ENCODE measurements at regions of chr1 and their contacts with region 1.

Region 1: DNA sequence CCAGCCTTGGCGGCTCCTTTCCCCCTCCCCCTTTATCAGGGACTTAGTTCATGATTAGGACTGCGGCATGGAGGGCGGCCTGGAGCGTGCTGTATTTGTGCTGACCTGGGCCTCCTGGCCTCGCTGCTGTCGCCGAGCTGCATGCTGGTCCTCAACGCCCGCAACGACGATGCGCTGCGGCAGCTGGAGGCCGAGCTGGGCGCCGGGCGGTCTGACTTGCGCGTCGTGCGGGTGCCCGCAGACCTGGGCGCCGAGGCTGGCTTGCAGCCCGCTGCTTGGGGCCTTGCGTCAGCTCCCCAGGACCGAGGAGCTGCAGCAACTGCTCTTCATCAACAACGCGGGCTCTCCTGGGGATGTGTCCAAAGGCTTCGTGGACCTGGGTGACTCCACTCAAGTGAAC is 70.9 kb downstream of the TM2D1 start:
- DNase-seq: no peak
- H3K4me3 Mint-ChIP-seq: no peak overlapping the region
- H3K27ac Mint-ChIP-seq: no peak overlapping the region
- H3K4me1 Mint-ChIP-seq: peaks cover 5% of the 10 kb centered on the region
- H3K27me3 Mint-ChIP-seq: no peaks in the 10 kb centered on the region
- CTCF ChIP-seq: no peak

Region 2: DNA sequence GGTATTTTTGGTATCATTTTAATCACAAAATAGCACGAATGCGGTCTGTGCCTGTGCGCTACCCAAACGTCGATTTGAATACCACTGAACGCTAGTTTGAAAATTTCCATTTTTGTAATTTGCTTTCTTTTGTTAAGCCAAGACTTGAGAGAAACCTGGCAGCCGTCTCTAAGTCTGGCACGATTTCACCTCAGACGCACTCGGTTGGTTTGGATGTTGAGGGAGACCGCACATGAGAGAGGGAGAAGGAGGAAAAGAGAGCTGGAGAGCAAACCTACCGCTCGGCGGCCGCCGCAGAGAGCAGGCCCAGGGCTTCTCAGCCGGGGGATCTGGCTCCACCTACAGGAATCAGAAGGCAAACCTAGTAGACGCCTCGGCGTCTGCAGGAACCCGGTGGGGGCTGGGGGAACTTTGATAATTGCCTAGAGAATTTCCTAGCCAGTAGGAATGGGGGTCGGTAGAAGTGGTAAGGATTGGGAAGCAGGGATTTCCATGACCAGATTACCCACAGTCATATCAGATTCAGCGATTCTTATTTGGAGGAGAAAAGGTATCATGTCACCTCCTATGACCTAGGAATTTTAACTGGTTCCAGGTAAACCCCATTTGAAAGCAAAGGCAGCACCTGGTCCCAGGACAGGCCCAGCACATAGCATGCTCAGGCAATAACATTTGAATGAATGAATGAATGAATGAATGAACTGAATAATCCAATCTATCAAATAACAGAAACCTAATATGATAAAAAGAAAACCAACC is 12.3 kb before region 1 on chr1:
- CTCF ChIA-PET with region 1: interaction called, 3 read pairs
- POLR2A ChIA-PET with region 1: interaction called, 3 read pairs
- intact Hi-C with region 1: loop called (anchors 1 kb)
- DNase-seq: peak; percentile 39
- H3K4me3 Mint-ChIP-seq: no peak overlapping the region
- H3K27ac Mint-ChIP-seq: no peak overlapping the region
- H3K4me1 Mint-ChIP-seq: peaks cover 16% of the 10 kb centered on the region
- H3K27me3 Mint-ChIP-seq: no peaks in the 10 kb centered on the region
- CTCF ChIP-seq: peak; percentile 36